AG04450 (cell line): ENCODE measurements at regions of chr4 and their contacts with region 1.

Region 1: DNA sequence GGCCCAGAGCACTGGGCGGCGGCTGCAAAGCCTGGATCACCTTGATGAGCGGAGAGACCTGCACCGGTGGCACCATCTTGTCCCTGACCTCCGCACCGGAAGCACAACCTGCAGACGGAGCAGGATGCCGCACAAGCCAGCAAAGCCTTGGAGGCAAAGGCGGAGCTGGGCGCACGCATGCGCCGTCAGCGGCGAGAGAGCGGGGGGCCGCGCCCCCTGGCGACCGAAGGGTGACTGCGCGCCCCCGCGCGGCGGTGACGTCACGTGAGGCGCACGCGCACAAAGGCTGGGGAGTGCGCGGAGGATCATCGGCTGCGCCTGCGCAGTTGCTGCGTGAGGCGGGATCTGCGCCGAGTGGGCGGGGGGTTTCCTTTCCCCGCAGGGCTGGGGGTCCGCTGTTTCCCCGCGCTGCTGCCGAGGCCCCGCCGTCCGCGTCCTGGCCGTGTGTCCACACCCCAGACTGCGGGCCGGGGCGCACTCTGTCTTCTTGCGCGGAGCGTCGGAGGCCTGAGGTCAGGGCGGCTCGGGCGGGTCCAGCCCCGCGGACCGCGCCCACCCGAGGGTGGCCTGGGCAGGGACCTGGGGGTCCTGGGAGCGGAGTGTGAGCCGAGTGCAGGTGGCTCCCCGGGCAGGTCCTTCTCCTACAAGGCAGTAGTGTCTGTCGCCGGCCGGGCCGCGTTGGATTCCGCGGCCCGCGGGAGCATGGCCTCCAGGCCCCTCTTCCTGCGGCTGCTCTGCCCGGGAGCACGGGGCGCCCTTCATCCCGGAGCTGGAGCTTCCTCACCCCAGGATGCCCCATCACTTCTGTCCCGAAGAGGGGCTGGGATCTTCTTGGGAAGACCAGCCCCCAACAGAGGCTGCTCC is at the starts of genes ATP5ME and MYL5:
- DNase-seq: peak; percentile 89
- H3K4me3 ChIP-seq: peak within 1 kb of the TSS; percentile 84
- H3K27ac ChIP-seq: peak within 1 kb of the TSS; percentile 21
- H3K27me3 ChIP-seq: no peaks in the 10 kb centered on the region
- CTCF ChIP-seq: peak; percentile 76
- polyA plus RNA-seq, gene ATP5ME: 262 and 313 TPM in 2 replicates
- polyA plus RNA-seq, gene MYL5: 12.3 and 13.0 TPM in 2 replicates

Region 2: GRCh38 chr4:499577-499976 is 174.8 kb before region 1 on chr4:
- CTCF ChIA-PET with region 1: no interaction called
- POLR2A ChIA-PET with region 1: interaction called, 11 read pairs
- DNase-seq: no peak
- H3K4me3 ChIP-seq: peak overlapping the region; percentile 95
- H3K27ac ChIP-seq: peak overlapping the region; percentile 80
- H3K27me3 ChIP-seq: no peaks in the 10 kb centered on the region
- CTCF ChIP-seq: no peak